Heart left ventricle (tissue), 16 donors: ENCODE measurements at regions of chr20 and their contacts with region 1.

Region 1: DNA sequence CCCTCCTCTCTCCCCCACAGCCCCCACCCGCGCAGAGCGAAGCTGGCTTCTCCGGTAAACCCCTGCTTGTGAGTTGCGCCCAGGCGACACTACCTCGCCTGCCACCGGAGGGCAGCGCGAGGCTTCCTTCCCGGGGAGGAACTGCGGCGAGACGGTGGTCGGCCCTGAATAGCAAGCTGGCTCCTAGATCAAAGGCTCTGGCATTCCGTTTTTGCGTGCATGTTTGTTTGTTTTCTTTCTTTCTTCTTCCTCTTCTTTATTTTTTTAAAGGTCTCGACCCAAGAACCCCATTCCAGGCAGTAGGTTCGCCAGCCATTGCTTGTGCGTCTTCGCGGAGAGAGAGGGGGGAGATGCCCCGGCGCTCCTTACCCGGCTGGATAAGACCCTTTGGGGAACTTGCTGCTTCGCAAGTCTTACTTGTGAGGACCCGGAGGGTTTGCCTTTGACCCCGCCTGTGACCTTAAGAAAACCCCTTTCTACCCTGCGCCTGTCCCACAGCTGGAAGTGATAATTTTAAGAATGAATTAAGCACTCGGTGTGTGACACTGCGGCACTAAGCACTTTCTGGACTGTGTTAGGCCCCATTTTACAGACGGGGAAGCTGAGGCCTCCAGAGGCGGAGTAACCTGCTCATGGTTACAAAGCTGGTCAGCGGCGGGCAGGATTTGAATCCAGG is 92.7 kb upstream of the SIRPA start:
- DNase-seq: peak; percentile 66 to 87 (median 74)
- ATAC-seq: peak; percentile 82 to 92 (median 86)
- H3K4me3 ChIP-seq: peak overlapping the region; percentile 47 to 82 (median 66)
- H3K27ac ChIP-seq: peak overlapping the region in 10 of 12 donors; percentile 66 to 90 (median 80)
- H3K4me1 ChIP-seq: peaks cover 0 to 39% (median 19%) of the 10 kb centered on the region in 12 donors
- H3K27me3 ChIP-seq: no peaks in the 10 kb centered on the region
- CTCF ChIP-seq: peak; percentile 43 to 79 (median 68)
- POLR2A ChIP-seq: no peak

Region 2: DNA sequence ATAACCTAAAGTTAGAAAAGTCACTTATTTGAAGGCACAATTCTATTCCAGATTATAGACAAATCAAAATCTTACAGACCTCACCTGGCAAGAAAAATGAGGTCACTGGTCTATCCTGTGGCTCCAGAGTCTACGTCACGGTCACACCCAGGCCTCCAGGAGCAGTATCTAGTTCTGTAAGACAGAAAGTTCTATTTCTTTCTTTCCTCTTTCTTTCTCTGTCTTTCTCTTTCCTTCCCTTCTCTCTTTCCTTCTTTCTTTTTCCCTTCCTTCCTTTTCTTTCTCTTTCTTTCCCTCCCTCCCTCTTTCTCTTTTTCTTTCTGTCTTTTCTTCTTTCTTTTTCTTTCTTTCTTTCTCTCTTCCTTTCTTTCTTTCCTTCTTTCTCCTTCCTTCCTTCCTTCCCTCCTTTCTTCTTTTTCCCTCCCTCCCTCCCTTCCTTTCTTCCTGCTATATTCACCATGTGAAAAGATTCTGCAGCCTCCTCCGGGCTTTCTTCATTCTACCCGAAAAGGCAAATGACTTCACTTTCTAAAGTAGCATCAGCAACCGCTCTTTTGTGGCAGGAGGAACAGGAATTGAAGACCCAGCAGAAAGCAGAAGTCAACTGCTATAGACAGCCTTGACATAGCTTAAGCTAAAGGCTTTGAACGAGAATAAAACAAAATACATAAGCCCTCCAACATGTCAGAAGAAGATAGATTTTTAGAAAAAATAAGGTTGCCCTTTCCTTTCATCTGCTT is 61.0 kb before region 1 on chr20:
- intact Hi-C with region 1: no loop called
- DNase-seq: no peak
- ATAC-seq: no peak
- H3K4me3 ChIP-seq: no peak overlapping the region
- H3K27ac ChIP-seq: no peak overlapping the region
- H3K4me1 ChIP-seq: no peaks in the 10 kb centered on the region
- H3K27me3 ChIP-seq: peaks cover 0 to 10% (median 0%) of the 10 kb centered on the region in 9 donors
- CTCF ChIP-seq: no peak
- POLR2A ChIP-seq: no peak

Region 3: DNA sequence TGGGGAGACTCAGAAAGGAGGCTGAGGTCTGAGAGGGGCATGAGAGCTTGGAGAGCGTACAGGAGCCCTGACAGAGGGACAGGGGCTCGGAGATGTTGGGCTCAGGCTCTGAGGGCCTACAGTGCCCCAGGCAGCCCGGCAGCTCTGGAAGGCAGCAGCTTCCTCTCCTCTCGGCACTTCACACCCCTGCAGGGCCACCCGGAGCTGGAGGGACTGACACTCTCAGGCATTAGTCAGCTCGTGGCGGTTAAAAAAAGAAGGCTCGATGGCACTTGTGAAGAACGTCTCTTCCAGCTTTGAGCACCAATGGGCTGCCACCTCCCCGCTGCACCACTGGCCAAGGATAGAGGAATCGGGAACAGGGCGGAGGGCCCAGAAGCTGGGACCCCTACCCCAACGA is 30.1 kb after region 1 on chr20:
- intact Hi-C with region 1: loop called in 1 of 10 experiments (anchors 2 kb)
- DNase-seq: peak in 2 of 5 donors; percentile 46 to 70
- ATAC-seq: peak; percentile 12 to 49 (median 30)
- H3K4me3 ChIP-seq: no peak overlapping the region
- H3K27ac ChIP-seq: peak overlapping the region in 7 of 12 donors; percentile 27 to 66 (median 42)
- H3K4me1 ChIP-seq: peaks cover 0 to 52% (median 28%) of the 10 kb centered on the region in 12 donors
- H3K27me3 ChIP-seq: no peaks in the 10 kb centered on the region
- CTCF ChIP-seq: no peak
- POLR2A ChIP-seq: no peak

Region 4: GRCh38 chr20:1876975-1877608 is 74.6 kb after region 1 on chr20:
- intact Hi-C with region 1: loop called in 1 of 10 experiments (anchors 5 kb)
- DNase-seq: no peak
- ATAC-seq: peak in 3 of 4 donors; percentile 15 to 34 (median 23)
- H3K4me3 ChIP-seq: no peak overlapping the region
- H3K27ac ChIP-seq: no peak overlapping the region
- H3K4me1 ChIP-seq: peaks cover 0 to 30% (median 11%) of the 10 kb centered on the region in 12 donors
- H3K27me3 ChIP-seq: peaks cover 0 to 8% (median 0%) of the 10 kb centered on the region in 9 donors
- CTCF ChIP-seq: no peak
- POLR2A ChIP-seq: no peak

Region 5: GRCh38 chr20:1894951-1895673 is 92.6 kb after region 1 on chr20 and contains the start of gene SIRPA:
- intact Hi-C with region 1: loop called (anchors 2 to 10 kb)
- DNase-seq: peak; percentile 68 to 81 (median 74)
- ATAC-seq: peak; percentile 35 to 74 (median 64)
- H3K4me3 ChIP-seq: peak within 1 kb of the TSS; percentile 53 to 96 (median 71)
- H3K27ac ChIP-seq: peak within 1 kb of the TSS; percentile 84 to 98 (median 92)
- H3K4me1 ChIP-seq: peaks cover 0 to 57% (median 32%) of the 10 kb centered on the region in 12 donors
- H3K27me3 ChIP-seq: no peaks in the 10 kb centered on the region
- CTCF ChIP-seq: no peak
- POLR2A ChIP-seq: peak in 1 of 2 donors; percentile 34
- total RNA-seq, gene SIRPA: 13.6 to 73.5 (median 28.5) TPM